Head of caudate nucleus (tissue), 42 donors: ENCODE measurements at regions of chr4 and their contacts with region 1.

Region 1: GRCh38 chr4:89657931-89658700 is 178.8 kb downstream of the SNCA start:
- DNase-seq: peak in 2 of 42 donors; percentile 15 to 29

Region 2: DNA sequence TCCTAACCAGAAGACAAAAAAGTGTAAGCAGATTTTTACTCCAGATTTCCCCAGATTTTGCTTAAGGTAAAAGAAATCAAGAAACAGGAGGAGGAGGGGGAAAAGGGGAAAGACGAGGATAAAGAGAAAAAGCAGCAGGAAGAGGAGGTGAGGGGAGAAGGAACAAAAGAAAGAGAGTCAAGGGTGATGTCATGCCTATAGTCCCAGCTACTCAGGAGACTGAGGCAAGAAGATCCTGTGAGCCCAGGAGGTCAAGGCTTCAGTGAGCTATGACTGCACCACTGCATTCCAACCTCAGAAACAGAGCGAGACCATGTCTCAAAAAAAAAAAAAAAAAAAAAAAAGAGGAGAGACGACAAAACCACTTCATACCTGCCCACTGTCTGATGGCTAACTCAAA is 1662.7 kb before region 1 on chr4:
- intact Hi-C with region 1: no loop called
- DNase-seq: no peak

Region 3: DNA sequence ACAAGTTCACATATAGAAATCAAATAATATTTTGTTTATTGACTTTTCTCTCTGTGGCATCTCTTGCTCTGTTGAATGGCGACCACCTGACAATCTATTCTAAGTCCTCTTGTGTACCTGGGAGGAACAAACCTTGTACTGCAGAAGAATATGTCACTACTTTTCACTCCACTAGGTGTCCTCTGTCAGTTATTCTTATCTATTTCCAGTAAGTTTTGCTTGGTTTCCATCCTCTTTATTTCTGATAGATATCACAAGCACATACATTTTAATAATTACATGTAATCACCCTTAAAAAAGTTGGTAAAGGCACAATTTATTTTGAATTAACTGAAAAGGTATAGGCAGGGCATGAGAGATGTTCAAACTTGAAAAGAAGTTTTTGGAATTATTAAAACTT is 59.5 kb before region 1 on chr4:
- intact Hi-C with region 1: no loop called
- DNase-seq: no peak

Region 4: DNA sequence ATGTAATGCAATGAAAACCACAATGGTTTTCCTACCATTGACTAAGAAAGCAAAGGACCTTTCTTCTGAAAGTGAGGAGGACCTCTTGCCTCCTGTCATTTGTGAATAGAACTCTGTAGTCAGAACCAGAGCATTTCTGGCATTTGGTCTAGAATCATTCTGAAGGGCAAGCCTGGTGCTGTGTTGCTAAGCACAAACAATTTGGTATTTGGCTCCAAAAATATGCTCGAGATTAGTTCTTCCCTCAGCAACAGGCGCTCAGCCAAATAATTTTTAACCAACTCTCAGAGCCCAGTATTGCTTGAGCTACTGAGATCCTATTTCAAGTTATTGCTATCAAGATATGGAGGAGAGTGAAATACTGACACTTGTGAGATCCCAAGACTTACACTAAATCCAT is 107.8 kb after region 1 on chr4:
- intact Hi-C with region 1: no loop called
- DNase-seq: peak in 2 of 42 donors; percentile 20 to 48

Region 5: GRCh38 chr4:89847571-89848325 is 189.6 kb after region 1 on chr4:
- intact Hi-C with region 1: loop called (anchors 10 kb)
- DNase-seq: no peak

Region 6: DNA sequence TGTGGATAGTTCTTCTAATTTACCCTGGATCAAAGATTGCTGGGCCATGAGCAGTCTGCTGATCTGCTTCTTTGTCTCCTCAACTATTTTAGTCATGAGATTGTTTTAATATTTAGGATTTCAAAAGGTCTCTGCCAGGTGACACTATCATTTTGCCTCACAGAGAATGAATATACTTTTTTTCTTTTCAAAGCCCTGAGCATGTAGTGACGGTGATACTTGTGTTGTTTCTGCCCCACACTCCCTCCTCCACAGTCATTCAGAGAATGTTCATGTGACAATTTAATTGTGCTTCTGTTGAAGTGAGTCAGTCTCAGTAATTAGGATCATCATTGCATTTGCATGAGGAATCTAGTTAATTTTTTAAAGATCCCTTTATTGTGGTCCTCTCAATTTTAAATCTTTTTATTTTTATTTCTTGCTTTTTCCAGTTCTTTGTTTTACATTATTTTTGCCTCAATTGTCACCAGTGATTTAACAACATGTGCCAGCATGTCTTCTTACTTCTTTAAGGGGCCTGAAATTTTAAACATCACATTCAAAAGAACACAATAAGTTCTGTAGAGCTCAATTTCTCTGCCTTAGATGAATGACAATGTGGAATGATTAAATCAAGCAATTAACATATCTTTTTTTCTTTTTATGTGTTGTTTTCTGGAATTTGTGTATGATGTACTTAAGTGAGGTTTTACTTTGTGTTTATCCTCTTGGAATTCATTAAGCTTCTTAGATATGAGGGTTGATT is 248.8 kb after region 1 on chr4:
- intact Hi-C with region 1: loop called (anchors 10 kb)
- DNase-seq: peak in 1 of 42 donors; percentile 12